B cell (primary cell): ENCODE measurements at regions of chr10 and their contacts with region 1.

Region 1: DNA sequence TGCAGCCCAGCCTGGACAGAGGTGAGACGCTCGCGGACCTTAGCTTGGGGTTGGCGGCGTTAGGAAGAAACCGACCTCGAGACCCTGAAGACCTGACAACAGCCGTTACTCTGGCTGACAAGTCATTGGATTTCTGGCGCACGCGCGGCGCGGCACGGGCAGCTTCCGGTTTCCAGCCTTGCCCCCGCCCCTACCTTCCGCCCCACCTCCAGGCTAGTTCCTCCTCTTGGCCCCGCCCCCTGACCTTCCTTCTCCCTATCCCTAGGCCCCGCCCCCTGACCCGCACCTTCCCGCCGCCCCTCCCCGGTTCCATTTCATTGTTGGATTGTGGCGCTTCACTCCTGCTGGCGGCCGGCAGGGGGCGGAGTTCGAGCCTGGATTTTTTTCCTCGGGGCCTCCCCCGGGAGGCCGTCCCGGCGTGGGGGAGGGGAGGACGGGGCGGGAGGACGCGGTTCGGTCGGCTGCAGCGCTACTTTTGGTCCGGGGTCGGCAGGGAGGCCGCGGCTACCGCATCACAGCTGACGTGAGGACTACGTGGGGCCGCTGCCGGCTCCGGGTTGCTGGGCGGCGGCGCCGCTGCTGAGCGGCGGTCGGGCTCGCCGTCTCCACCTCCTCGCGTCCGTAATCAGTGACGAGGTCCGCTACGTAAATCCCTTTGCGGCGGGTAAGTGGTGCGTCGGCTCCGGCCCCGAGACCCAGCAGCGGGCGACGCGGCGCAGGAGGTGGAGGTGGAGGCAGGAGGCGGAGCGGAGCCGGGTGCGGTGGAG is at the start of gene CREM:
- DNase-seq: peak; percentile 99
- ATAC-seq: peak; percentile 84
- H3K4me3 ChIP-seq: peak within 1 kb of the TSS; percentile 43 to 99 (median 93)
- H3K4me3 Mint-ChIP-seq: peak within 1 kb of the TSS; percentile 81
- H3K27ac ChIP-seq: peak within 1 kb of the TSS; percentile 94 to 100
- H3K27ac Mint-ChIP-seq: peak within 1 kb of the TSS; percentile 100
- H3K4me1 ChIP-seq: peaks cover 8 to 17% of the 10 kb centered on the region in 2 donors
- H3K4me1 Mint-ChIP-seq: peaks cover 37% of the 10 kb centered on the region
- H3K27me3 ChIP-seq: no peaks in the 10 kb centered on the region
- H3K27me3 Mint-ChIP-seq: no peaks in the 10 kb centered on the region
- CTCF ChIP-seq: peak; percentile 80
- total RNA-seq, gene CREM: 94.6 and 97.4 TPM in 2 replicates

Region 2: DNA sequence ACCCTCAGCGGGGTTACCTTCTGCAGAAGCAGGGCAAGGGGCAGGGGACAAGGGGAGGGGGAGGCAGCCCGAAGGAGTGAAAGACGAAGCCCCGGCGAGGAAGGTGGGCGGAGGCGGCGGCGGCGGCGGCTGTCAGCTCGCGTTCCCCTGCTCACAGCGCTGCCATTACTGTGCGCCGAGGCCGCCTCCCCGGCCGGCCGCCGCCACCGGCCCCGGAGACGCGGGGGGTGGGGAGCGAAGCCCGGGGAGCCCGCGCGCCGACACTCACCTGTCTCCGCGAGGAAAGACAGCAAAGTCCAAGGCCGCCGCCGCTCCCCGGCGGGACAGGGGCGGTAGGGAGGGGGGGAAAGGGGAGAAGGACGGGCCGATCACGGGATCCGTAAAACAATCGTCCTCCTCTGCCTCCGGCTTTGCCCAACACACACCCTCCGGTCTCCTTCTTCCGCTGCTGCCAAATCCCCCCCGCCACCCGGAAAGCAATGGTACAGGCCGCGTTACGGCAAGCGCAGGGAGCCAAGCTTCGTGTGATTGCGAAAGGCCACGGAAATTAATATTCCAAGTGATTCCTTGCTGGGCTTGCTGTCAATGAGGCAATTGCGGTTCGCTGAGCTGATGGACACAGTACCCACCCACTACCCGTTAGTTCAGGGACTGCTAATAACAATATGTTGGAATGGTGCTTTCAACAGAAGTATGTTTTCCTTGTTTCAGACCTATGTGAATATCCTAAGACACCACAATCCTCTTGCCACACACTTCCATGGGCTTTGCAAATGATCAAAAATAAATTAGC is 36.4 kb before region 1 on chr10 and contains the start of gene CUL2:
- CTCF ChIA-PET with region 1: interaction called, 15 read pairs
- POLR2A ChIA-PET with region 1: interaction called, 9 read pairs
- intact Hi-C with region 1: loop called (anchors 1 kb)
- DNase-seq: peak; percentile 98
- ATAC-seq: peak; percentile 95
- H3K4me3 ChIP-seq: peak within 1 kb of the TSS; percentile 62 to 92 (median 80)
- H3K4me3 Mint-ChIP-seq: peak within 1 kb of the TSS; percentile 89
- H3K27ac ChIP-seq: peak within 1 kb of the TSS; percentile 95 to 98
- H3K27ac Mint-ChIP-seq: peak within 1 kb of the TSS; percentile 95
- H3K4me1 ChIP-seq: peaks cover 29 to 31% of the 10 kb centered on the region in 2 donors
- H3K4me1 Mint-ChIP-seq: peaks cover 50% of the 10 kb centered on the region
- H3K27me3 ChIP-seq: no peaks in the 10 kb centered on the region
- H3K27me3 Mint-ChIP-seq: no peaks in the 10 kb centered on the region
- CTCF ChIP-seq: no peak
- total RNA-seq, gene CUL2: 36.9 and 41.9 TPM in 2 replicates

Region 3: DNA sequence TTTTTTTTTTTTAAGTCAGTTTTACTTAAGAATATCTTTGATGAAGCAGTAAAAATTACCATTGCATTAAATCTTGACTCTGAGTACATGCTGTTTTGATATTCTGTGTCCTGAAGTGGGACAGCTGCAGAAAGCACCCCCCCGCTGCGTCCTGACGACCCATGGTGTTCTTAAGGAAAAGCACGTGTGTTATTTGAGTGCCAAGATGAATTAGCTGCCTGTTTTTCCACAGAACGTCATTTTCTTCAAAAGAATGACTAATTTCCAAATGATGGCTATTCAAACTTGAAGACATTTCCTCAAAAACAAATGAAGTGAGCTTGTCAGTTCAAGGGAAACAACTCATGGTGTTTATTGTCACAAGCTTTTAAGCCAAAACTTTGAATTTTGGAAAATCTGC is 45.9 kb after region 1 on chr10:
- CTCF ChIA-PET with region 1: no interaction called
- POLR2A ChIA-PET with region 1: interaction called, 10 read pairs
- intact Hi-C with region 1: no loop called
- DNase-seq: no peak
- ATAC-seq: no peak
- H3K4me3 ChIP-seq: no peak overlapping the region
- H3K4me3 Mint-ChIP-seq: no peak overlapping the region
- H3K27ac ChIP-seq: no peak overlapping the region
- H3K27ac Mint-ChIP-seq: no peak overlapping the region
- H3K4me1 ChIP-seq: no peaks in the 10 kb centered on the region
- H3K4me1 Mint-ChIP-seq: no peaks in the 10 kb centered on the region
- H3K27me3 ChIP-seq: no peaks in the 10 kb centered on the region
- H3K27me3 Mint-ChIP-seq: no peaks in the 10 kb centered on the region
- CTCF ChIP-seq: no peak

Region 4: GRCh38 chr10:35246770-35247343 is 120.1 kb after region 1 on chr10:
- CTCF ChIA-PET with region 1: no interaction called
- POLR2A ChIA-PET with region 1: no interaction called
- intact Hi-C with region 1: no loop called
- DNase-seq: no peak
- ATAC-seq: no peak
- H3K4me3 ChIP-seq: no peak overlapping the region
- H3K4me3 Mint-ChIP-seq: no peak overlapping the region
- H3K27ac ChIP-seq: no peak overlapping the region
- H3K27ac Mint-ChIP-seq: no peak overlapping the region
- H3K4me1 ChIP-seq: no peaks in the 10 kb centered on the region
- H3K4me1 Mint-ChIP-seq: no peaks in the 10 kb centered on the region
- H3K27me3 ChIP-seq: no peaks in the 10 kb centered on the region
- H3K27me3 Mint-ChIP-seq: peaks cover 11% of the 10 kb centered on the region
- CTCF ChIP-seq: no peak

Region 5: GRCh38 chr10:35336084-35336831 is 209.5 kb after region 1 on chr10 and contains the start of gene CCNY:
- CTCF ChIA-PET with region 1: no interaction called
- POLR2A ChIA-PET with region 1: no interaction called
- intact Hi-C with region 1: loop called (anchors 1 kb)
- DNase-seq: peak; percentile 83
- ATAC-seq: peak; percentile 87
- H3K4me3 ChIP-seq: peak within 1 kb of the TSS; percentile 50 to 90 (median 74)
- H3K4me3 Mint-ChIP-seq: peak within 1 kb of the TSS; percentile 87
- H3K27ac ChIP-seq: peak within 1 kb of the TSS; percentile 43 to 77
- H3K27ac Mint-ChIP-seq: peak within 1 kb of the TSS; percentile 82
- H3K4me1 ChIP-seq: peaks cover 34% of the 10 kb centered on the region in 2 donors
- H3K4me1 Mint-ChIP-seq: peaks cover 56% of the 10 kb centered on the region
- H3K27me3 ChIP-seq: no peaks in the 10 kb centered on the region
- H3K27me3 Mint-ChIP-seq: no peaks in the 10 kb centered on the region
- CTCF ChIP-seq: no peak
- total RNA-seq, gene CCNY: 61.7 and 64.9 TPM in 2 replicates

Region 6: DNA sequence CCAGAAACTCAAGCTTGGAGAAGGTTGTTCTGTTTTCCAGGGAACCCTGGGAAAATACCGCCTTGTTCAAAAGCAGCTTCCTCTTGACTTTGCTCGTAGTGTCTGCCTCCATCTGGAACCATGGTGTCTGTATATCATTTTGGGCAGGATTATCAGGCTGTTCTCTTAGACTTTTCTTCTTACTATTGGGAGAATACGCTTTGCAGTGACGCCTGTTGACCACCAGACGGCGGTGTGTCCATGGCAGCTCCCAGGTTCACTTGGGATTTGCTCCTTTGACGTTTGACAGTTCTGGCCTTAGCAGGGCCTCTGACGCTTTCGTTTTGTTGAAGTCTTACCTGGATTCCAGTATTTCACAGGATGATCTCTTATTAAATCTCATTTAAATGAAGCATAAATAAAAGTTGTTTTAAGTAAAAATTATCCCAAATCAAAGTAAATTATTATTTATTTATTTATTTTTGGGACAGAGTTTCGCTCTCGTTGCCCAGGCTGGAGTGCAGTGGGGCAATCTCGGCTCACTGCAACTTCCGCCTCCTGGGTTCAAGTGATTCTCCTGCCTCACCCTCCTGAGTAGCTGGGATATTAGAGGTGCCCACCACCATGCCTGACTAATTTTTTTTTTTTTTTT is 436.7 kb after region 1 on chr10:
- CTCF ChIA-PET with region 1: interaction called, 13 read pairs
- POLR2A ChIA-PET with region 1: no interaction called
- intact Hi-C with region 1: loop called (anchors 2 kb)
- DNase-seq: peak; percentile 66
- ATAC-seq: peak; percentile 54
- H3K4me3 ChIP-seq: no peak overlapping the region
- H3K4me3 Mint-ChIP-seq: no peak overlapping the region
- H3K27ac ChIP-seq: no peak overlapping the region
- H3K27ac Mint-ChIP-seq: no peak overlapping the region
- H3K4me1 ChIP-seq: peaks cover 12 to 20% of the 10 kb centered on the region in 2 donors
- H3K4me1 Mint-ChIP-seq: peaks cover 19% of the 10 kb centered on the region
- H3K27me3 ChIP-seq: no peaks in the 10 kb centered on the region
- H3K27me3 Mint-ChIP-seq: no peaks in the 10 kb centered on the region
- CTCF ChIP-seq: peak; percentile 98